PC-9 (cell line): ENCODE measurements at regions of chr2 and their contacts with region 1.

Region 1: DNA sequence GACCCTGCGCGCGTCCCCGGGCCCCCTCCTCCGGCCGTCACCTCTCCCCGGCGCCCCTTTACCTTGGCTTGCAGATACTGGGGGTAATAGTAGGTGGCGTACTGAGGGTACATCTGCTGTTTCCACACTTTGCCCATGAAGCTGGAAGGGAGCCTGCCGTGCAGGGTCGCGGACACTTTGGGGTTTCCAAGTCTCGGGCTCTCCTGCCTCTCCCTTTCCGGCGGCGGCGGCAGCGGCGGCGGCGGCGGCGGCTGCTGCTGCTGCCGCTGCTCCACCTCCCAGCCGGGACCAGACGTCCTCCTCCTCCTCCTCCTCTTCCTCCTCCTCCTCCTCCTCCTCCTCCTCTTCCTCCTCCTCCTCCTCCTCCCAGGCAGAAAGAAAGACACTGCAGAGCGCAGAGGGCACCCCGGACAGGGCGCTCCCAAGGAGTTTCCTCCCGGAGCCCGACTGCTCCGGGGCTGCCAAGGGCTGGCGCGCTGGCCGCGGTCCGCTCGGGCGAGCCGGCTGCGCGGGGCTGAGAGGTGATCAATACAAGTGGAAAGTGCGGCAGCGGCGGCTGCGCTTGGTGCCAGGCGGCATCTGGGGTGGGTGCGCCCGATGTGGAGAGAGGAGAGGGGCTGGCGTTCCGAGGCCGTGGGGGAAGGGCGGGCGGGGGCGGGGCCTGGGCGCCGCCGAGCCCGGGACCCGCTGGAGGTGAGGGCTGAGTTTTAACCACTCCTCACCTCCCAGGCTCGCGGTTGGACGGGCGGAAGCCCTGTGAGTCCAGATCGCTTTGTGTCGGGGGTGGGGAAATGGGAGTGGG is at the start of gene RBMS1:
- DNase-seq: peak in 1 of 2 experiments; percentile 57
- H3K4me3 ChIP-seq: peak within 1 kb of the TSS; percentile 85
- H3K27ac ChIP-seq: peak within 1 kb of the TSS; percentile 73
- H3K4me1 ChIP-seq: peaks cover 38% of the 10 kb centered on the region
- H3K27me3 ChIP-seq: no peaks in the 10 kb centered on the region
- CTCF ChIP-seq: no peak
- total RNA-seq, gene RBMS1: 50.7 and 65.1 TPM in 2 replicates

Region 2: DNA sequence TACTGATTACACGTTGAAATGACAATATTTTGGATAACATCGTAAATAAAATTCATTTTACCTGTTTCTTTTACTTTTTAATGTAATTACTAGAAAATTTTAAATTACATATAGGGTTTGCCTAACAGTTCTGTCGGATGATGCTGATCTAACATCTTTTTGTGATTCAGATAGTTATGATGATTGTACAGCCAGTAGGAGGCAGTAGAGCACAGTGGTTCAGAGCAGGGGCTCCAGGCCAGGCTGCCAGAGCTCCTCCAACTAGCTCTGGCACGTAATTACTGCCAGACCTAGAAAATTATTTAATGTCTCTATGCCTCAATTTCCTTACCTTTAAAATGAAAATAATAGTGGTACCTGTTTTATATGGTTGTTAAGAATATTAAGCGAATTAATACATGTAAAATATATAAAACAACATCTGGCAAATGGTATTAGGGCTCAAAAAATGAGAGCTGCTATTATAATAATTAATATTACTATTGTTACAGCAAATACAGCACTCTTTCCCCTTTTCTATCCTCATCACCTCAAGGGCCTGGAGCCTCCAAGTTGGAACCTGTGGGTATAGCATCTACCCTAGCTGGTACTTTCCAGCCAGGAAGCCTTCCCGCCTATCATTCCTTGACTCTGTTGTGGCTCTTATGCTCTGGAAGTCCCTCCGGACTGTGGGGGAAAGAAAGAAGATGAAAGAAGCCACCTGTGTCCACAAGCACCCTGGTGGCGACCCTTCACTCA is 383.3 kb before region 1 on chr2:
- CTCF ChIA-PET with region 1: no interaction called
- POLR2A ChIA-PET with region 1: interaction called, 8 read pairs
- intact Hi-C with region 1: loop called (anchors 10 kb)
- DNase-seq: peak in 1 of 2 experiments; percentile 46
- H3K4me3 ChIP-seq: no peak overlapping the region
- H3K27ac ChIP-seq: no peak overlapping the region
- H3K4me1 ChIP-seq: no peaks in the 10 kb centered on the region
- H3K27me3 ChIP-seq: no peaks in the 10 kb centered on the region
- CTCF ChIP-seq: peak; percentile 77

Region 3: GRCh38 chr2:160324161-160324800 is 169.1 kb before region 1 on chr2:
- CTCF ChIA-PET with region 1: no interaction called
- POLR2A ChIA-PET with region 1: interaction called, 11 read pairs
- intact Hi-C with region 1: no loop called
- DNase-seq: peak in 1 of 2 experiments; percentile 27
- H3K4me3 ChIP-seq: no peak overlapping the region
- H3K27ac ChIP-seq: no peak overlapping the region
- H3K4me1 ChIP-seq: no peaks in the 10 kb centered on the region
- H3K27me3 ChIP-seq: no peaks in the 10 kb centered on the region
- CTCF ChIP-seq: peak; percentile 70

Region 4: DNA sequence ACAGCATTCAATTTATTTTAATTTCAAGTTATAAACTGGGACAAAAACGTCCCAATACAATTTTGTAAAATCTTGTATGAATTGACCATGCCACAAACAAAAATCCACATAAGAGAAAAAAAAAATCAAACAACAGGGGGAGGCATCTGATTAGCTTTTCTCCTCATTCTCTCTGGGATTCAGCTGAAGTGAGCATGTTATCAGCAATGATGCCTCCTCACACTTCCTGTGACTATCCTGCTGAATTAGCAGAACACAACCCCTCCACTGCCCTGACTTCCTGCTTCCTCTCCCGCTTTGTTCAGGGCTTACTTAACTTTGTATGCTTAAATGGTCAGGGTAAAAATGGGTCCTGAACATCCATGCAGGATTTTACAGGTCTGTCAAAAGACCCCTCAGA is 161.1 kb before region 1 on chr2:
- CTCF ChIA-PET with region 1: no interaction called
- POLR2A ChIA-PET with region 1: no interaction called
- intact Hi-C with region 1: loop called (anchors 5 kb)
- DNase-seq: no peak
- H3K4me3 ChIP-seq: no peak overlapping the region
- H3K27ac ChIP-seq: no peak overlapping the region
- H3K4me1 ChIP-seq: peaks cover 27% of the 10 kb centered on the region
- H3K27me3 ChIP-seq: no peaks in the 10 kb centered on the region
- CTCF ChIP-seq: no peak

Region 5: DNA sequence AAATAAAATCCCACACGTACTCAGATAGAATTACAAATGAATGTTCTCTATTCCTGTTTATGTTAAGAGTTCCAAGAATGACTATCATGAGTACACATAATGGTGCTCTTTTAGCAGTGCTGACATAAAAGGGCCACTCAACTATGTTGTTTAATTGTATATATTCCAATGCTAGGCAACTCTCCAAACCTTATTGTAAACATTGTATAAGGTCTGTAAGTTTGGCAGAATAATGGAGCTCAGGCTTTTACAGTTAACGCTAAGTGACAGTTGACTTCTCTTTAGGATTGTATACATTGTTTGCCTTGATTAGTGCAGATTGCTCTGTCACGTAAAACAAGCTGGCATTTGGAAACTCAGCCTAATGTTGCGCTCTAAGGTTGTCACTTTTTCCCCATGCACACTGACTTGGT is 20.6 kb before region 1 on chr2:
- CTCF ChIA-PET with region 1: no interaction called
- POLR2A ChIA-PET with region 1: interaction called, 10 read pairs
- intact Hi-C with region 1: no loop called
- DNase-seq: no peak
- H3K4me3 ChIP-seq: no peak overlapping the region
- H3K27ac ChIP-seq: no peak overlapping the region
- H3K4me1 ChIP-seq: no peaks in the 10 kb centered on the region
- H3K27me3 ChIP-seq: no peaks in the 10 kb centered on the region
- CTCF ChIP-seq: no peak

Region 6: GRCh38 chr2:160516547-160517365 is 23.3 kb after region 1 on chr2:
- CTCF ChIA-PET with region 1: no interaction called
- POLR2A ChIA-PET with region 1: interaction called, 39 read pairs
- intact Hi-C with region 1: no loop called
- DNase-seq: no peak
- H3K4me3 ChIP-seq: no peak overlapping the region
- H3K27ac ChIP-seq: no peak overlapping the region
- H3K4me1 ChIP-seq: no peaks in the 10 kb centered on the region
- H3K27me3 ChIP-seq: no peaks in the 10 kb centered on the region
- CTCF ChIP-seq: no peak

Region 7: GRCh38 chr2:160652236-160652635 is 158.8 kb after region 1 on chr2:
- CTCF ChIA-PET with region 1: no interaction called
- POLR2A ChIA-PET with region 1: no interaction called
- intact Hi-C with region 1: loop called (anchors 5 kb)
- DNase-seq: no peak
- H3K4me3 ChIP-seq: no peak overlapping the region
- H3K27ac ChIP-seq: no peak overlapping the region
- H3K4me1 ChIP-seq: peaks cover 35% of the 10 kb centered on the region
- H3K27me3 ChIP-seq: no peaks in the 10 kb centered on the region
- CTCF ChIP-seq: no peak

Region 8: DNA sequence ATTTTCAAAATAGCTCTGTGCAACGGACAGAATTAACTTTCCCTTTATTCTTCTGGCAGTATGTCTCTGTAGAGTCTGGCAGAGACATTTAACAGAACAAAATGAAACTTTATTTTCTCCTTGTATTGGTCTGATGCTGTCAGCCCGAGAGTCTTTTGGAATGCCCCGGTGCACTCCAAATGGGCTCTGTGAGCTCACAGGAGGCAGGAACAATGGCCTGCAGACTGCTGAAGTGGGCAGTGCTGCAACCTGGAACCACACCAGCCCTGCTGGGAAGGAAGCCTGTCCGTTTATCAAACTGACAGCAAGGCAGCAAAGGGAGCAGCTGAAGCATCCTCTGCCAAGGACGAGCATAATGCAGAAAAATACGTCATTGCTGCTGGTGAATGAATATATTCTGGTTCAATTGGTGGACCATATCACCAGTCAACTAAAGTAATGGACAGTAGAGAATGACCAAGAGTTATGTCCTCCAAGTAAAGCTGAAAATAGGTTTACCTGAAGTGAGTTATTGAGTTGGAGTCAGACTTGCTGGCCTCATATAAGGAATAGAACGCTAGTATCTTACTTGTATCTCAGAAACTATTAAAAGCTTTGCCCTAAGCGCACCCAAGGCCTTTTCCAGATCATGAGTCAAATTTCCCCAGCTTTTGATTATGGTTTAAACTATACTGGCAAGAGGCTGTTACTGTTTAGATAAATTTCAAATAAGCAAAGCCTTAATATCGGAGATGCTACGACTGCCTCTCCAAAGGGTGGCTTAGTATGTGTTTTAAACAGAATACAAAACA is 459.2 kb after region 1 on chr2:
- CTCF ChIA-PET with region 1: no interaction called
- POLR2A ChIA-PET with region 1: no interaction called
- intact Hi-C with region 1: no loop called
- DNase-seq: no peak
- H3K4me3 ChIP-seq: no peak overlapping the region
- H3K27ac ChIP-seq: no peak overlapping the region
- H3K4me1 ChIP-seq: no peaks in the 10 kb centered on the region
- H3K27me3 ChIP-seq: no peaks in the 10 kb centered on the region
- CTCF ChIP-seq: no peak